MCF 10A (cell line): ENCODE measurements at regions of chr2 and their contacts with region 1.

Region 1: DNA sequence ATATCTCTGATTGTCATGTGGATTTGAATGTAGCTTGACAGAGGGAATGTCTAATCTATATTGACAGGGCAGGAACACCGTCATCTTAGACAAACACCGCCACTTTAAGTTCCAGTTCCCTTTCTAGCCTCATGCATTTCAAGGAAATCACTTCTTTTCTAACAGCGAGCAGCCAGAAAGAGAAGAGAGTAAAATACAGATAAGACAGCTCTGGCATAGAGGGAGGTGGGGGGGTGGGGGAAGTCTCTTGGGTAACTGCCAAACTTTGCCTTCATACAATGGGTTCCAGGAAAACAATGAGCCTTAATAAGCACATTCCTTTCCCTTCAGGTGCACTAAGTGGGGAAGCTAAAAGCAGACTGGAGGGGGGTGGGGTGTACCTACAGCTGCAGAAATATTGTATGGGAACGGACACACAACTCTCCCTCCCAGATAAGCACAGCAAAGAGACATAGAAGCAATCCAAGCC is 37.2 kb downstream of the CASP10 start:
- DNase-seq: peak; percentile 61
- H3K4me3 Mint-ChIP-seq: no peak overlapping the region
- H3K27ac Mint-ChIP-seq: no peak overlapping the region
- H3K4me1 Mint-ChIP-seq: no peaks in the 10 kb centered on the region
- H3K27me3 Mint-ChIP-seq: no peaks in the 10 kb centered on the region
- CTCF ChIP-seq: no peak

Region 2: GRCh38 chr2:201040867-201041628 is 179.1 kb before region 1 on chr2:
- CTCF ChIA-PET with region 1: no interaction called
- POLR2A ChIA-PET with region 1: no interaction called
- intact Hi-C with region 1: no loop called
- DNase-seq: no peak
- H3K4me3 Mint-ChIP-seq: no peak overlapping the region
- H3K27ac Mint-ChIP-seq: no peak overlapping the region
- H3K4me1 Mint-ChIP-seq: no peaks in the 10 kb centered on the region
- H3K27me3 Mint-ChIP-seq: no peaks in the 10 kb centered on the region
- CTCF ChIP-seq: no peak

Region 3: GRCh38 chr2:201194097-201194496 is 26.0 kb before region 1 on chr2:
- CTCF ChIA-PET with region 1: no interaction called
- POLR2A ChIA-PET with region 1: interaction called, 10 read pairs
- intact Hi-C with region 1: no loop called
- DNase-seq: no peak
- H3K4me3 Mint-ChIP-seq: no peak overlapping the region
- H3K27ac Mint-ChIP-seq: no peak overlapping the region
- H3K4me1 Mint-ChIP-seq: peaks cover 5% of the 10 kb centered on the region
- H3K27me3 Mint-ChIP-seq: no peaks in the 10 kb centered on the region
- CTCF ChIP-seq: no peak